GM12878 (cell line): ENCODE measurements at regions of chr6 and their contacts with region 1.

Region 1: GRCh38 chr6:37882724-37883413 is 63.3 kb downstream of the ZFAND3 start:
- DNase-seq: no peak
- ATAC-seq: no peak
- H3K4me3 ChIP-seq: no peak overlapping the region
- H3K27ac ChIP-seq: no peak overlapping the region
- H3K4me1 ChIP-seq: peaks cover 11% of the 10 kb centered on the region
- H3K27me3 ChIP-seq: no peaks in the 10 kb centered on the region
- CTCF ChIP-seq: no peak
- EP300 ChIP-seq: no peak
- POLR2A ChIP-seq: no peak
- RAD21 ChIP-seq: no peak

Region 2: DNA sequence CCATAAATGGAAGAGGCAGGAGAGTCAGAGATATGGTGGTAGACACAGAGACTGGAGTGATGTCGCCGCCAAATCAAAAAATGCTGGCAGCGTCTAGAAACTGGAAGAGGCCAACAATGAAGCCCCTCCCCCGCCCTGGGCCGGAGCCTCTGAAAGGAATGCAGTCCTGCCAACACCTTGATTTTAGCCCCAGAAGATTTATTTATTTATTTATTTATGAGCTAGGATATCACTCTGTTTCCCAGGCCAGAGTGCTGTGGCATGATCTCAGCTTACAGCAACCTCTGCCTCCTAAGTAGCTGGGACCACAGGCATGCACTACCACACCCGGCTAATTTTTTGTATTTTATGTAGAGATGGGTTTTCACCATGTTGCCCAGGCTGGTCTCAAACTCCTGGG is 300.6 kb before region 1 on chr6:
- CTCF ChIA-PET with region 1: no interaction called
- POLR2A ChIA-PET with region 1: no interaction called
- RAD21 ChIA-PET with region 1: no interaction called
- SMC1A ChIA-PET with region 1: no interaction called
- in situ Hi-C with region 1: no loop called
- intact Hi-C with region 1: no loop called
- DNase-seq: no peak
- ATAC-seq: no peak
- H3K4me3 ChIP-seq: no peak overlapping the region
- H3K27ac ChIP-seq: no peak overlapping the region
- H3K4me1 ChIP-seq: no peaks in the 10 kb centered on the region
- H3K27me3 ChIP-seq: no peaks in the 10 kb centered on the region; a peak in 1 of 4 replicates
- CTCF ChIP-seq: no peak
- EP300 ChIP-seq: no peak
- POLR2A ChIP-seq: no peak
- RAD21 ChIP-seq: no peak

Region 3: GRCh38 chr6:37868447-37868825 is 14.4 kb before region 1 on chr6:
- CTCF ChIA-PET with region 1: interaction called, 8 read pairs
- POLR2A ChIA-PET with region 1: interaction called, 6 read pairs
- RAD21 ChIA-PET with region 1: interaction called, 3 read pairs
- SMC1A ChIA-PET with region 1: interaction called, 27 read pairs
- in situ Hi-C with region 1: no loop called
- intact Hi-C with region 1: no loop called
- DNase-seq: no peak
- ATAC-seq: peak; percentile 12; the same call in 2 of the 3 replicates
- H3K4me3 ChIP-seq: no peak overlapping the region
- H3K27ac ChIP-seq: peak overlapping the region; percentile 37
- H3K4me1 ChIP-seq: peaks cover 28% of the 10 kb centered on the region
- H3K27me3 ChIP-seq: no peaks in the 10 kb centered on the region
- CTCF ChIP-seq: no peak
- EP300 ChIP-seq: no peak
- POLR2A ChIP-seq: no peak
- RAD21 ChIP-seq: no peak

Region 4: GRCh38 chr6:37893257-37893656 is 10.4 kb after region 1 on chr6:
- CTCF ChIA-PET with region 1: interaction called, 8 read pairs
- POLR2A ChIA-PET with region 1: interaction called, 3 read pairs
- RAD21 ChIA-PET with region 1: no interaction called
- SMC1A ChIA-PET with region 1: interaction called, 13 read pairs
- in situ Hi-C with region 1: no loop called
- intact Hi-C with region 1: no loop called
- DNase-seq: no peak
- ATAC-seq: peak; percentile 24; the same call in 2 of the 3 replicates
- H3K4me3 ChIP-seq: no peak overlapping the region
- H3K27ac ChIP-seq: no peak overlapping the region
- H3K4me1 ChIP-seq: peaks cover 10% of the 10 kb centered on the region
- H3K27me3 ChIP-seq: no peaks in the 10 kb centered on the region
- CTCF ChIP-seq: no peak
- EP300 ChIP-seq: no peak
- POLR2A ChIP-seq: no peak
- RAD21 ChIP-seq: no peak